A673 (cell line): ENCODE measurements at regions of chrX and their contacts with region 1.

Region 1: GRCh38 chrX:131633285-131633917 is 89.5 kb downstream of the OR13H1 start:
- DNase-seq: peak; percentile 83
- H3K4me3 ChIP-seq: no peak overlapping the region
- H3K27ac ChIP-seq: no peak overlapping the region
- H3K4me1 ChIP-seq: no peaks in the 10 kb centered on the region
- H3K27me3 ChIP-seq: peaks cover 11% of the 10 kb centered on the region
- CTCF ChIP-seq: peak; percentile 87

Region 2: GRCh38 chrX:130626521-130626920 is 1006.9 kb before region 1 on chrX:
- CTCF ChIA-PET with region 1: no interaction called
- POLR2A ChIA-PET with region 1: no interaction called
- intact Hi-C with region 1: no loop called
- DNase-seq: no peak
- H3K4me3 ChIP-seq: no peak overlapping the region
- H3K27ac ChIP-seq: no peak overlapping the region
- H3K4me1 ChIP-seq: no peaks in the 10 kb centered on the region
- H3K27me3 ChIP-seq: no peaks in the 10 kb centered on the region
- CTCF ChIP-seq: no peak

Region 3: GRCh38 chrX:130994671-130995070 is 638.7 kb before region 1 on chrX:
- CTCF ChIA-PET with region 1: interaction called, 4 read pairs
- POLR2A ChIA-PET with region 1: no interaction called
- intact Hi-C with region 1: loop called (anchors 2 kb)
- DNase-seq: peak; percentile 51
- H3K4me3 ChIP-seq: no peak overlapping the region
- H3K27ac ChIP-seq: no peak overlapping the region
- H3K4me1 ChIP-seq: no peaks in the 10 kb centered on the region
- H3K27me3 ChIP-seq: no peaks in the 10 kb centered on the region
- CTCF ChIP-seq: peak; percentile 83

Region 4: DNA sequence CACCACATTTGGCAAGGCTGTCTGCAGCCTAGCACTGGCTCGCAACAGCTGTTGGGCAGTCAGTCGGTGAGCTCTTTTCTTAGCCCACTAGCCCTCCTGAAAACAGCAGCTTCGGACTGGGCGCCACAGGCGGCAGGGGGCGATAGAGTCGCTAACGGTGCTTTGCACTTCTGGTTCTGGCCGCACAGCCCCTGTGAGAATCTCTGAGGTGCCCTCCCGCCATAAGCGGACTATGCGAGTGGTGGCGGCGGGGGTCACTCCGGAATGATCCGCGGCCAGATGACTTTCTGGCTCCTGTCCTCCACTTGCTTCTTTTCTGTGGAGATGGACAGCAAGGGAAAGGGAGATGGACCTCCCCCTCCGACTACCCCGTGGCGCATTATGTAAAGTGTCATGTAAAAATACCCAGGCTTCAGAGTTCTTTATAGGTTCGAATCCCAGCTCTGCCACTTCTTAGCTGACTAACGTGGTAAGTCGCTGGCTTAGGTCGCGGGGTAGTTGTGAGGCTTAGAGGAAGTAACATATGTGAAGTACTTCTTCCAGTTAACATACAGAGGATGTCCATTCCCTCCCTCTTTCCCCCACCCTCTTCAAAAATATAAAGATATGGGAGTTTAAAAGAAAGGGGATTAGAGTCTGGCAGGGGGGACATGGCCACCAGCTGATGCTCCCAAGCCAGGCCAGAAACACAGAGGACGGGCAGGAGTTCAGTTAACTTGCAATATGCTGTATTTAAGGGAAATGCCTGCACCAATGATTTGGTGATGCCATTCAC is 564.3 kb before region 1 on chrX:
- CTCF ChIA-PET with region 1: interaction called, 3 read pairs
- POLR2A ChIA-PET with region 1: no interaction called
- intact Hi-C with region 1: loop called (anchors 2 kb)
- DNase-seq: peak; percentile 51
- H3K4me3 ChIP-seq: no peak overlapping the region
- H3K27ac ChIP-seq: no peak overlapping the region
- H3K4me1 ChIP-seq: no peaks in the 10 kb centered on the region
- H3K27me3 ChIP-seq: peaks cover 75% of the 10 kb centered on the region
- CTCF ChIP-seq: peak; percentile 63

Region 5: DNA sequence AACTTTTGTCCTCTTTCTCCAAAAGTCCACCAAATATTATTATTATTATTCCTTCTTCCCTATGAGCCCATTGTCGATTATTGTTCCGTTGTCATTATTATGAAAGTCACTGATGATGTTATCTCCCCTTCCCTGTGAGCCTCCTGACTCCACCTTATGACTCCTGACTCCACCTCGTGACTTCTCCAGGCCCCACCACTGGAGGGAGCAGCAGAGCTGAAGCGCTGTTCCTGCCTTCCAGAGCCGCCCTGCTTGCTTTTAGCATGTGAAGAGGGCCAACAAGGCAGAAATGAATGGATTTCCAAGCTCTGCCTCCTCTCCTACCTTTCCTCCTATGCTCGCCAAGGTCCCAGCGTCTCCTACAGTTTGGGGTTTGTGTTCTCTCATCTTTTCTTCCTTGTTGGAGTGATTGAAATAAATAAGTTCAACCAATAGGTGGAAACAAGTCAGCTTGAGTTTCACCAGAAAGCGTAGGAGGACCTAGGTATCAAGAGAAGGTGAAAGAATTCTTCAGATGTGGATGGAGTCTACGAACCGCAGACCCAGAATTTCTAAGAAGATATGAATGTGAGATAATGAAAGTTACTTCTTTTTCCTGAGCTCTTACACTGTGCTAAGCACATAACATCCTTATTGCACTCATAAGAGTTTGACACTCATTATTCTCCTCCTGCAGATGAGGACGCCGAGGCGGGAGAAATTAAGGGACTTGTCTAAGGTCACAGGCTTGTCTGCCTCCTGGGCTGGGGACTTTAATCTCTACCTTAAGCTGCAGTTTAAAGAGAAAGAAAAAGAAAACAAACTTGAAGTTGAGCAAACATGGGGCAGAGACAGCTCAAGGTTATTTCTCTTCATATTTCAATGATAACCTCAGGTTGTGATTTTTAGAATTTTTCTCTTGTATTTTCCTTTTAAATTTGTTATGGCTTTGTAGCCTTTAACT is 370.4 kb before region 1 on chrX:
- CTCF ChIA-PET with region 1: no interaction called
- POLR2A ChIA-PET with region 1: no interaction called
- intact Hi-C with region 1: loop called (anchors 10 kb)
- DNase-seq: peak; percentile 20
- H3K4me3 ChIP-seq: no peak overlapping the region
- H3K27ac ChIP-seq: no peak overlapping the region
- H3K4me1 ChIP-seq: no peaks in the 10 kb centered on the region
- H3K27me3 ChIP-seq: no peaks in the 10 kb centered on the region
- CTCF ChIP-seq: peak; percentile 52

Region 6: GRCh38 chrX:131565909-131566308 is 67.5 kb before region 1 on chrX:
- CTCF ChIA-PET with region 1: no interaction called
- POLR2A ChIA-PET with region 1: no interaction called
- intact Hi-C with region 1: no loop called
- DNase-seq: no peak
- H3K4me3 ChIP-seq: no peak overlapping the region
- H3K27ac ChIP-seq: no peak overlapping the region
- H3K4me1 ChIP-seq: no peaks in the 10 kb centered on the region
- H3K27me3 ChIP-seq: peaks cover 3% of the 10 kb centered on the region
- CTCF ChIP-seq: no peak

Region 7: DNA sequence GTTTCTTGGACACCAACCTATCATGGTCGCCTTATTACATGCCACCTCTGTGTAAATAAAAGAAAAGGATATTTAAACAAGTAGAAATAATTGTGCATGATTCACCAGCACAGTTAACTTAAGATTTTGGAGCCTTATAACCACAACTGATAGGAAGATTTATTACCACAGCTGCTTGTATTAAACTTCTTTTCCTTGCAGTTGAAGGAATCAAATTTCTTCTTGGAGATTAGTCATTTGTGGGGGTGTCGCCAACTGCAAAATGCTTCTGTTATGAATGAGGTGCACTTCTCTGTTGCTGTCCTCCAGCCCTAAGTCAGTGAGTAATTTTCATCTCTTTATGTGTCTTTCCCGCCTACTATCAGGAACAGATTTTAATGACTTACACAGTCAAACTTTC is 16.2 kb before region 1 on chrX:
- CTCF ChIA-PET with region 1: no interaction called
- POLR2A ChIA-PET with region 1: no interaction called
- intact Hi-C with region 1: no loop called
- DNase-seq: peak; percentile 57
- H3K4me3 ChIP-seq: no peak overlapping the region
- H3K27ac ChIP-seq: no peak overlapping the region
- H3K4me1 ChIP-seq: no peaks in the 10 kb centered on the region
- H3K27me3 ChIP-seq: peaks cover 27% of the 10 kb centered on the region
- CTCF ChIP-seq: no peak